CD8-positive, alpha-beta T cell (primary cell): ENCODE measurements at regions of chr7 and their contacts with region 1.

Region 1: DNA sequence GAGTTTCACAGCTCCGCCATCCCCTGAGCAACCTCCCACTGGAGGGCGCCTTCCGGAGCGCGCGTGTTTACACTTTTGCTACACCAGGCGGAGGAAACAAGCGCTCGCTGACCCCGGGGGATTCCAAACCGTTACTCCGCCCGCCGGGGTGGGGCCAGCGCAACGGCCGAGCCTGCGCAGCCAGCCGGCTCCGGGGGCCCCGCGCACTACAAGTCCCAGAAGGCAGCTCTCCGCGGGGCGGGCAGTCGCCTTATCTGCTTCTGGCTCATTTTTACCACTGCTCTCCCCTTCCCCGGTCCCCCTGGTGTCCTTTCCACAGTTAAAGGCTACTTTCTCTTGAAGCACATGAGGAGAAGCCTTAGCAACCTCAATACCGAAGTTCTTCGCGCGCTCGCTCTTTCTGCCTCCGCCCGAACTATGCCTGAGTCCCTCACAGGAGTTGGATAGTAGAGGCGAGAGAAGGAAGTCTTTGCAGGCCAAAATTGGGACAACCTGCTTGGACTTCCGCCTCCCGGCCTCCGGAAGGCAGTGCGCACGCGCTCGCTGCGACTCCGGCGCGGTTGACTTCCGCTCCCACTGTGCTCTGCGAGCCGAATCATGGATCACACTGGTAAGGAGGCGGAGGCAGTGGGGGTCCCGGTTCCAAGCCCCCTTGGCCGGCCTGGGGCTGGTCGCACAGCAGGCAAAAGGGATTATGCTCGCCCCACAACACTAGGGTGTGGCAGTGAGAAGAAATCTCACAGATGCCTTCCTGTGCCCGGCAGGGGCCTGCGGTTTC is at the start of gene CBLL1:
- DNase-seq: peak; percentile 96 to 99 (median 98)
- ATAC-seq: peak; percentile 91
- H3K4me3 ChIP-seq: peak within 1 kb of the TSS; percentile 90 to 99
- H3K4me3 Mint-ChIP-seq: peak within 1 kb of the TSS; percentile 92
- H3K27ac ChIP-seq: peak within 1 kb of the TSS; percentile 99
- H3K27ac Mint-ChIP-seq: peak within 1 kb of the TSS; percentile 100
- H3K4me1 ChIP-seq: peaks cover 46% of the 10 kb centered on the region
- H3K4me1 Mint-ChIP-seq: peaks cover 59% of the 10 kb centered on the region
- H3K27me3 ChIP-seq: no peaks in the 10 kb centered on the region
- H3K27me3 Mint-ChIP-seq: no peaks in the 10 kb centered on the region
- CTCF ChIP-seq: peak; percentile 68
- total RNA-seq, gene CBLL1: 68.5 to 71.6 TPM

Region 2: DNA sequence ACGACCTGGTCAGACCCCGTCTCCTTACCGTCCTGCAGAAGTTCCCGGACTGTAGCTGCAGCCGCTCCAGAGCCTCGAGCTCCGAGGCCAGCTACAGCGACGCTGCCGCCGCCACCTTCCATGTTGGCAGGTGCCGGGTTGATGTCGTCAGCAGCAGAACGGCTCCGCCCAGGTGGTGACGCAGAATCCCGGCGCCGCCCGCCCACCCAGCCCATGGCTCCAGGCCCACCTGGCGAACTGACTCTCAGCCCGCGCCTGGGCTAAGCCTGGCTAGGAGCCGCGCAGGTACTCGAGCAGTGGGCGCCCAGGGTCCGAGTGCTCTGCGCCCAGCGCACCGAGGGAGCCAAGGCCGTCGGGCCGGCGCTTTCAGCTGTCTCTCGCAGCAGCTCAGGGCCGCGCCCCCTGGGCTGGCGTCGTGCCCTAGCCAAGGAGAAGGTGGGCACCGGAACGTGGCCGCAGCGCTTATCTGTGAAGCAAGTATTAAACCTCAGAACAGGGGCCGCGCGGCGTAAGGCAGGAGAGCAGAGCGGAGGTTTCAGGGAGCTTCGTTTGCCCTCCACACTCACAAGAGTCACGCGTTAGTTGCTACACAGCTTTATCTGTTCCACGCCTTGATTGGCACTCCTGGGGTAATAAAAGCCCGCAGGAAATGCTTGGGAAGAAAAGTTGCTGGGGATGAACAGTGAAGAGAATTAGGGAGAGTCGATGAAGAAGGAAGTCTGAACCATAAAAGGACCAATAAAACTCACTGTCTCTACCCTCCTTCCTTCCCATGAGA is 179.8 kb before region 1 on chr7 and contains the starts of genes COG5 and DUS4L:
- CTCF ChIA-PET with region 1: no interaction called
- POLR2A ChIA-PET with region 1: interaction called, 14 read pairs
- intact Hi-C with region 1: loop called (anchors 1 to 2 kb)
- DNase-seq: peak; percentile 73 to 93 (median 86)
- ATAC-seq: peak; percentile 83
- H3K4me3 ChIP-seq: peak within 1 kb of the TSS; percentile 91 to 97
- H3K4me3 Mint-ChIP-seq: peak within 1 kb of the TSS; percentile 80
- H3K27ac ChIP-seq: peak within 1 kb of the TSS; percentile 95 to 96
- H3K27ac Mint-ChIP-seq: peak within 1 kb of the TSS; percentile 89
- H3K4me1 ChIP-seq: peaks cover 46% of the 10 kb centered on the region
- H3K4me1 Mint-ChIP-seq: peaks cover 65% of the 10 kb centered on the region
- H3K27me3 ChIP-seq: no peaks in the 10 kb centered on the region
- H3K27me3 Mint-ChIP-seq: no peaks in the 10 kb centered on the region
- CTCF ChIP-seq: no peak
- total RNA-seq, gene COG5: 45.7 to 46.8 TPM
- total RNA-seq, gene DUS4L: 13.1 to 16.4 TPM

Region 3: DNA sequence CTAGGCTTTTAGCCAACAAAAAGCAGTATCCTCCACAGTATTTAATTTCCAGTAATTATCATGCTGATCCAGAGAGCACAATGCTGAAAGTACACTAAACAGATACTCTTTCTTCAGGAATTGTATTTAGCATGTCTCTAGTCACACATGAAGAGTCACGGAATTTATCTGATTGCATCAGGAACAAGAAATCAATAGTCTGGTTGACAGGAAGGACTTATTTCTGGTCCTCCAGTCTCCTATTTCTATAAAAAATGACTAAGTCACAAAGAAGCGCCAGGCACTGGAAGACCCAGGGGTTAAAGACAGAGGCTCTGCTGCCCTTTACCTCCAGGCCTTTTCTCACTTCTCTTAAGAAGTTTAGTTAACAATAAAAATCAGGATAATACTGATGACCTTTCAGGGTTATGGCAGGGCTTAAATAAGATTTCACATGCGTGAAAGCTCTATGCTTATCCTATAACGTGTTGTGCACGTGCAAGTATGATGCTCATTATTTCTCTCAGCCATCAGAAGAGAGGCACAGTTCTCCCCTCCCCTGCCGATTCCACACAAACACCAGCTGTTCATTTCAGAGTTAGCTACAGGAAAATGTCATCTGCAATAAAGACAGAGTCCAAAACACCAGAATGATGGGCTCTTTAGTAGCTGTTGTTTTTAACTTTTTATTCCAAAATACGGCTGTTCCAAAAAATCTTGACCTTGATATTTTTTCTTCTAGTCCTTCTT is 46.3 kb before region 1 on chr7:
- CTCF ChIA-PET with region 1: no interaction called
- POLR2A ChIA-PET with region 1: no interaction called
- intact Hi-C with region 1: no loop called
- DNase-seq: no peak
- ATAC-seq: no peak
- H3K4me3 ChIP-seq: no peak overlapping the region
- H3K4me3 Mint-ChIP-seq: no peak overlapping the region
- H3K27ac ChIP-seq: no peak overlapping the region
- H3K27ac Mint-ChIP-seq: no peak overlapping the region
- H3K4me1 ChIP-seq: no peaks in the 10 kb centered on the region
- H3K4me1 Mint-ChIP-seq: no peaks in the 10 kb centered on the region
- H3K27me3 ChIP-seq: no peaks in the 10 kb centered on the region
- H3K27me3 Mint-ChIP-seq: peaks cover 13% of the 10 kb centered on the region
- CTCF ChIP-seq: no peak

Region 4: DNA sequence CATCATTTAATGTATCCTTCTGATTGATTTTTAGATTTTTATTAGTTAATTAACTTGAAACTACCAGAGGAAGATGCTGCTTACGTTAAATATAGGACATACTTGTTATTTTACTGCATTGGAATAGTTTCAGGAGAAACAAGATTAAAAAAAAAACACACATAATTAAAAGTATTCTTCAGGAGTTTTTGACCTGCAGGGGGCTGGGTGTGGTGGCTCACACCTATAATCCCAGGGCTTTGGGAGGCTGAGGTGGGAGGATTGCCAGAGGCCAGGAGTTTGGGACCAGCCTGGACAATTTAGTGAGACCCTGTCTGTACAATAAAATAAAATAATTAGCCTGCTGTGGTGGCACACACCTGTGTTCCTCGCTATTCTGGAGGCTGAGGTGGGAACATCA is 10.9 kb after region 1 on chr7:
- CTCF ChIA-PET with region 1: interaction called, 3 read pairs
- POLR2A ChIA-PET with region 1: interaction called, 14 read pairs
- intact Hi-C with region 1: no loop called
- DNase-seq: peak in 1 of 9 experiments; percentile 18
- ATAC-seq: no peak
- H3K4me3 ChIP-seq: no peak overlapping the region
- H3K4me3 Mint-ChIP-seq: no peak overlapping the region
- H3K27ac ChIP-seq: no peak overlapping the region
- H3K27ac Mint-ChIP-seq: no peak overlapping the region
- H3K4me1 ChIP-seq: no peaks in the 10 kb centered on the region
- H3K4me1 Mint-ChIP-seq: peaks cover 18% of the 10 kb centered on the region
- H3K27me3 ChIP-seq: no peaks in the 10 kb centered on the region
- H3K27me3 Mint-ChIP-seq: no peaks in the 10 kb centered on the region
- CTCF ChIP-seq: no peak

Region 5: GRCh38 chr7:107867858-107868466 is 124.2 kb after region 1 on chr7:
- CTCF ChIA-PET with region 1: interaction called, 5 read pairs
- POLR2A ChIA-PET with region 1: interaction called, 11 read pairs
- intact Hi-C with region 1: no loop called
- DNase-seq: no peak
- ATAC-seq: no peak
- H3K4me3 ChIP-seq: no peak overlapping the region
- H3K4me3 Mint-ChIP-seq: no peak overlapping the region
- H3K27ac ChIP-seq: no peak overlapping the region
- H3K27ac Mint-ChIP-seq: no peak overlapping the region
- H3K4me1 ChIP-seq: no peaks in the 10 kb centered on the region
- H3K4me1 Mint-ChIP-seq: peaks cover 22% of the 10 kb centered on the region
- H3K27me3 ChIP-seq: no peaks in the 10 kb centered on the region
- H3K27me3 Mint-ChIP-seq: no peaks in the 10 kb centered on the region
- CTCF ChIP-seq: no peak

Region 6: GRCh38 chr7:108525985-108526767 is 782.4 kb after region 1 on chr7 and contains the start of gene PNPLA8:
- CTCF ChIA-PET with region 1: no interaction called
- POLR2A ChIA-PET with region 1: interaction called, 3 read pairs
- intact Hi-C with region 1: loop called (anchors 5 to 10 kb)
- DNase-seq: peak; percentile 100
- ATAC-seq: peak; percentile 90
- H3K4me3 ChIP-seq: peak within 1 kb of the TSS; percentile 80 to 93
- H3K4me3 Mint-ChIP-seq: peak within 1 kb of the TSS; percentile 97
- H3K27ac ChIP-seq: peak within 1 kb of the TSS; percentile 94 to 96
- H3K27ac Mint-ChIP-seq: peak within 1 kb of the TSS; percentile 99
- H3K4me1 ChIP-seq: peaks cover 21% of the 10 kb centered on the region
- H3K4me1 Mint-ChIP-seq: peaks cover 48% of the 10 kb centered on the region
- H3K27me3 ChIP-seq: no peaks in the 10 kb centered on the region
- H3K27me3 Mint-ChIP-seq: no peaks in the 10 kb centered on the region
- CTCF ChIP-seq: no peak
- total RNA-seq, gene PNPLA8: 98.6 to 101 TPM